ENCODE measurements at regions of chr3 and their contacts with region 1.

Region 1: DNA sequence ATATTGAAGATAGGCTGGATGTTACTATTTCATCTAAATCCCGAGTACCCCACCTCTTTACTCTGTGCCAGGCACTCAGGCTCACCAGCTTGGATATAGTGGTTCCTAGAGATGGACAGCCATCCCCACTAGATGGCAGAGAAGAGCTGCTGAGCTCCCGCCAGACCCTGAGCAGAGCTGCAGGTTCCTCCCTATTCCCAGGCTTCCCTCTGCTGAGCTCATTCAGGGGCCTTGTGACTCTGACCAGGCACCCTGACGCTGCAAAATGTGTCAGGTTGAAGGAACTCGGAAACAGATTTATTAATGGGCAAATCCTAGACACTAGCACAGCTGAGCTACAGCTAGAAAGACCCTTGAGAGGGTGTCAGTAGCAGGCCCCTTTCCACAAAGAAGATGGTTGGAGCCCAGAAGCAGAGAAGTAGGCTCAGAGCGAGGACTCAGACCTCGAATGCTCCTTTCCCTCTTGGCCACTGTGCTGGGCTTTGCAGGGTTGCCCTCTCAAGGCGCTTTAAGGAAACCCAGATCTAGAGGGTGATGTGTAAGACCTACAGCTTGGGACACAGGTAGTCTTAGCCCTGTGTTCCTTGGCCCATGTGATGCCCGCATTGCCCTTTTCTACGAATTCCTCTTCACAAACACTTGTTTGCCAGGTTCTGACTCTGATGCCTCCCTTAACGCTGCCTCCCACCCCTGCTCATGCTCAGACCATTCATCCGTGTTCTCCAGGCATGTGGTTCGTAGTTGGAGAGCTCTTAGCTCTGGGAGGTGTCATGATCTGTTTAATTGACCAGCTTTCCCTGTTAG is 38.0 kb upstream of the RHO start:
- DNase-seq: peak; percentile 79 to 88
- ATAC-seq: peak; percentile 88 to 94 (median 91)
- H3K4me3 ChIP-seq: no peak overlapping the region
- H3K27ac ChIP-seq: peak overlapping the region in 9 of 10 donors; percentile 54 to 87 (median 76)
- H3K4me1 ChIP-seq: peaks cover 14 to 66% (median 40%) of the 10 kb centered on the region in 9 donors
- H3K27me3 ChIP-seq: no peaks in the 10 kb centered on the region
- CTCF ChIP-seq: peak; percentile 78 to 96 (median 90)

Region 2: GRCh38 chr3:129596194-129597086 is 106.0 kb after region 1 on chr3:
- intact Hi-C with region 1: loop called in 2 of 10 experiments (anchors 5 to 10 kb)
- DNase-seq: peak; percentile 93 to 96
- ATAC-seq: peak; percentile 74 to 89 (median 83)
- H3K4me3 ChIP-seq: peak overlapping the region in 9 of 10 donors; percentile 9 to 66 (median 37)
- H3K27ac ChIP-seq: peak overlapping the region; percentile 55 to 99 (median 92)
- H3K4me1 ChIP-seq: peaks cover 53 to 100% (median 98%) of the 10 kb centered on the region in 9 donors
- H3K27me3 ChIP-seq: no peaks in the 10 kb centered on the region
- CTCF ChIP-seq: peak in 2 of 9 donors; percentile 6 to 14

Region 3: GRCh38 chr3:129606636-129607390 is 116.4 kb after region 1 on chr3 and contains the start of gene PLXND1:
- intact Hi-C with region 1: loop called in 7 of 10 experiments (anchors 2 to 5 kb)
- DNase-seq: peak; percentile 83 to 87
- ATAC-seq: peak; percentile 63 to 78 (median 68)
- H3K4me3 ChIP-seq: peak within 1 kb of the TSS; percentile 62 to 91 (median 74)
- H3K27ac ChIP-seq: peak within 1 kb of the TSS; percentile 89 to 99 (median 94)
- H3K4me1 ChIP-seq: peaks cover 16 to 78% (median 72%) of the 10 kb centered on the region in 9 donors
- H3K27me3 ChIP-seq: peaks cover 0 to 18% (median 4%) of the 10 kb centered on the region in 7 donors
- CTCF ChIP-seq: no peak
- total RNA-seq, gene PLXND1: 40.9 to 106 (median 62.8) TPM

Region 4: GRCh38 chr3:129611812-129612533 is 121.5 kb after region 1 on chr3:
- intact Hi-C with region 1: loop called in 7 of 10 experiments (anchors 2 to 5 kb)
- DNase-seq: peak in 1 of 2 donors; percentile 62
- ATAC-seq: peak in 6 of 8 donors; percentile 14 to 53 (median 19)
- H3K4me3 ChIP-seq: no peak overlapping the region
- H3K27ac ChIP-seq: peak overlapping the region; percentile 13 to 98 (median 75)
- H3K4me1 ChIP-seq: peaks cover 34 to 100% (median 88%) of the 10 kb centered on the region in 9 donors
- H3K27me3 ChIP-seq: no peaks in the 10 kb centered on the region
- CTCF ChIP-seq: peak in 5 of 9 donors; percentile 15 to 35 (median 16)

Region 5: GRCh38 chr3:129627429-129628168 is 137.2 kb after region 1 on chr3:
- intact Hi-C with region 1: loop called in 5 of 10 experiments (anchors 2 to 5 kb)
- DNase-seq: peak; percentile 72 to 77
- ATAC-seq: peak; percentile 19 to 61 (median 55)
- H3K4me3 ChIP-seq: peak overlapping the region; percentile 26 to 79 (median 66)
- H3K27ac ChIP-seq: peak overlapping the region; percentile 95 to 100 (median 99)
- H3K4me1 ChIP-seq: peaks cover 30 to 64% (median 53%) of the 10 kb centered on the region in 9 donors
- H3K27me3 ChIP-seq: no peaks in the 10 kb centered on the region
- CTCF ChIP-seq: peak; percentile 67 to 93 (median 79)